ENCODE measurements at regions of chr1 and their contacts with region 1.

Region 1: GRCh38 chr1:109620841-109621286 is 1.2 kb downstream of the AMPD2 start:
- DNase-seq: peak; percentile 93 to 96 (median 94)
- ATAC-seq: peak; percentile 84
- H3K4me3 ChIP-seq: peak overlapping the region; percentile 61
- H3K27ac ChIP-seq: peak overlapping the region; percentile 90; the same call in 1 of the 3 replicates
- H3K4me1 ChIP-seq: peaks cover 32 to 61% of the 10 kb centered on the region in 2 experiments
- H3K27me3 ChIP-seq: no peaks in the 10 kb centered on the region
- CTCF ChIP-seq: no peak
- EP300 ChIP-seq: no peak
- POLR2A ChIP-seq: no peak
- RAD21 ChIP-seq: no peak

Region 2: GRCh38 chr1:109603233-109603632 is 17.6 kb before region 1 on chr1:
- CTCF ChIA-PET with region 1: no interaction called
- POLR2A ChIA-PET with region 1: interaction called, 16 read pairs
- in situ Hi-C with region 1: no loop called
- intact Hi-C with region 1: no loop called
- DNase-seq: no peak
- ATAC-seq: no peak
- H3K4me3 ChIP-seq: no peak overlapping the region
- H3K27ac ChIP-seq: no peak overlapping the region
- H3K4me1 ChIP-seq: no peaks in the 10 kb centered on the region
- H3K27me3 ChIP-seq: peaks cover 0 to 6% of the 10 kb centered on the region in 2 experiments; a peak in 1 of 5 replicates
- CTCF ChIP-seq: no peak
- EP300 ChIP-seq: no peak
- POLR2A ChIP-seq: no peak
- RAD21 ChIP-seq: no peak

Region 3: DNA sequence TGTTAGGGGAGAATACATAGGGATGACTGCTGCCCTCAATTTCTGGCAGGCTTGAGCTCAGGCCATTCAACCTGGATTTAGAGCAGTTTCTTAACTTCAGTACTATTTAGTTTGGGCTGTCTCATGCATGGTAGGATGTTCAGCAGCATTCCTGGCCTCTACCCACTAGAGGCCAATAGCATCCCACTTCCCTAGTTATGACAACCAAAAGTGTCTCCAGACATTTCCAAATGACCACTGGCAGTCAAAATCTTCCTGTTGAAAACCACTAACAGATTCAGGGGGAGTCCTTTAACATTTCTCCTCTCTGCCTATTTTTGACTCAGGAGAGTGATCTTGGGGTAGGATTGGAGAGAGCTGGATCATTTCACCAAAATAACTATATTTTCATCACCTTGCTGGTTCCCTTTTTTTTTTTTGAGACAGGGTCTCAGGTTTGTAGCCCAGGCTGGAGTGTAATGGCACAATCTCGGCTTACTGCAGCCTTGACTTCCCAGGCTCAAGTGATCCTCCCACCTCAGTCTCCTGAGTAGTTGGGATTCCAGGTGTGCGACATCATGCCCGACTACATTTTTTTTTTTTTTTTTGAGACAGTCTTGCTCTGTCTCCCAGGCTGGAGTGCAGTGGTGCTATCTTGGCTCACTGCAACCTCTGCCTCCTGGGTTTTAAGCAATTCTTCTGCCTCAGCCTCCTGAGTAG is 10.1 kb before region 1 on chr1:
- CTCF ChIA-PET with region 1: no interaction called
- POLR2A ChIA-PET with region 1: interaction called, 16 read pairs
- in situ Hi-C with region 1: no loop called
- intact Hi-C with region 1: no loop called
- DNase-seq: no peak
- ATAC-seq: no peak
- H3K4me3 ChIP-seq: no peak overlapping the region
- H3K27ac ChIP-seq: no peak overlapping the region
- H3K4me1 ChIP-seq: no peaks in the 10 kb centered on the region
- H3K27me3 ChIP-seq: peaks cover 31 to 32% of the 10 kb centered on the region in 2 experiments; a peak in 4 of 5 replicates
- CTCF ChIP-seq: no peak
- EP300 ChIP-seq: no peak
- POLR2A ChIP-seq: no peak
- RAD21 ChIP-seq: no peak

Region 4: GRCh38 chr1:109668123-109668775 is 47.4 kb after region 1 on chr1:
- CTCF ChIA-PET with region 1: no interaction called
- POLR2A ChIA-PET with region 1: no interaction called
- in situ Hi-C with region 1: no loop called
- intact Hi-C with region 1: no loop called
- DNase-seq: peak in 2 of 4 experiments; percentile 2 to 5
- ATAC-seq: 0 out of 3 replicates have a peak, but pooled peaks have one; percentile 3
- H3K4me3 ChIP-seq: peak overlapping the region; percentile 28
- H3K27ac ChIP-seq: no peak overlapping the region
- H3K4me1 ChIP-seq: peaks cover 4 to 15% of the 10 kb centered on the region in 2 experiments
- H3K27me3 ChIP-seq: no peaks in the 10 kb centered on the region; a peak in 1 of 5 replicates
- CTCF ChIP-seq: no peak
- EP300 ChIP-seq: no peak
- POLR2A ChIP-seq: no peak
- RAD21 ChIP-seq: no peak